Head of caudate nucleus (tissue), 42 donors: ENCODE measurements at regions of chr17 and their contacts with region 1.

Region 1: GRCh38 chr17:45385331-45385997 is 47.2 kb downstream of the ARHGAP27 start:
- DNase-seq: peak; percentile 73 to 96 (median 90)

Region 2: GRCh38 chr17:45218895-45219661 is 166.4 kb before region 1 on chr17:
- intact Hi-C with region 1: loop called (anchors 2 kb)
- DNase-seq: peak; percentile 54 to 97 (median 92)

Region 3: DNA sequence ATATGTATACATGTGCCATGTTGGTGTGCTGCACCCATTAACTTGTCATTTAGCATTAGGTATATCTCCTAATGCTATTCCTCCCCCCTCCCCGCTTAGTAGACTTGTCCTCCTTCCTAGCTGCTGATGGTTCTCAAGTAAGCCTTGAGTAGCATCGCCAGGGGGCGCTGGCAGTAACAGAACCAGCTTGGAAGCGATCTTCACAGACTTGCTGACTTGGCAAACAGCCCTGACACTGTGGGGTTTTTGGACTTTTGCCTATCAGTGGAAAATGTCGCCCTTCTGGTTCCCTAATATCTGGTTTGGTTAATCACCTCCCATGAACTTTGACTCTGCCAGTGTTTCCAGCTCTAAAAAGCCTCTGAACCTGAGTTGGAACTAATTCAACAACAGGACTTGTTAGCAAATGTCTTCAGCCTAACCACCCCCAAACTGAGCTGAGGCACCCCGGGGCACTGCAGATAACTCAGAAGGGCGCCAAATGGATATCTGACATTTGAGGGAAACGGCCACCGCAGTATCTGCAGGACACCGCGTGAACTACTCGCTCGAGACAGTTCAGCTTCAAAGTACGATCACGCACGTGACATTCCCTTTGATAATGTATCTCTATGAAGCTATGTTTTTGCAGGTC is 108.1 kb before region 1 on chr17:
- intact Hi-C with region 1: loop called (anchors 2 kb)
- DNase-seq: peak; percentile 84 to 97 (median 92)

Region 4: GRCh38 chr17:45353043-45353442 is 32.4 kb before region 1 on chr17:
- intact Hi-C with region 1: no loop called
- DNase-seq: peak in 1 of 42 donors; percentile 20